Caco-2 (cell line): ENCODE measurements at regions of chr11 and their contacts with region 1.

Region 1: DNA sequence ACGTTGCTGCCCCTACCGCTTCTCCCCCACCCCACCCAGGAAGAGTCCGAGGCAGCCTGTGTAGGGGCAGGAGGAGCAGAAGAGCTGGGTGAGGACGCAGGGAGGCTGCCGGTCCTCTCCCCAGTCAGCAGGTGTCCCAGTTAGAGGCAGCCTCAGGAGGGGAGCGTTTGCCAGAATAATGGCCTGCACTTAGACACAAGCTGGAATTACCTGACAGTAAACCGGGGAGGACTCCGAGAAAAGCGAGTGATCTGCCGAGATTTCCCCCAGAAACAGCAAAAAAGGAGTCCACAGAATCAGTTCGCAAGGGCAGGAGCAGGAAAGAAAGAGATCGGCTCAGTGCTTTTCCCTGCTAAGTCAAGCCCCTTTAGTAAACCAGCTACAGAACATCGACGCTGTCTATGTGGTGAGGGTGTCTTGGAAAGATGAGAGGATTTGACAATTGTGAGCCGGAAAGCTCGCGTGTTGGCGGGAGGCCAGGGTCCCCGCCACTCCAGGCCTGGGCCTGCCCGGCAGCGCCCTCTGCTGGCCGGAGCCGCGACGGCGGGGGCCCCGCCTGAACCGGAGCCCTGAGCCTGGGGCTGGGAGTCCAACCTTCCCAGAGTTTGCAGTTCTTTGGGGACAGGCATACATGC is 17.7 kb upstream of the THRSP start:
- DNase-seq: peak; percentile 80 to 97
- H3K4me3 ChIP-seq: peak overlapping the region; percentile 28
- H3K4me3 Mint-ChIP-seq: peak overlapping the region; percentile 75
- H3K27ac Mint-ChIP-seq: peak overlapping the region; percentile 1
- H3K4me1 ChIP-seq: peaks cover 15% of the 10 kb centered on the region
- H3K4me1 Mint-ChIP-seq: peaks cover 23% of the 10 kb centered on the region
- H3K27me3 ChIP-seq: no peaks in the 10 kb centered on the region
- H3K27me3 Mint-ChIP-seq: no peaks in the 10 kb centered on the region
- CTCF ChIP-seq: peak; percentile 99

Region 2: GRCh38 chr11:77695417-77695816 is 350.6 kb before region 1 on chr11:
- CTCF ChIA-PET with region 1: no interaction called
- POLR2A ChIA-PET with region 1: no interaction called
- intact Hi-C with region 1: no loop called
- DNase-seq: no peak
- H3K4me3 ChIP-seq: no peak overlapping the region
- H3K4me3 Mint-ChIP-seq: no peak overlapping the region
- H3K27ac Mint-ChIP-seq: no peak overlapping the region
- H3K4me1 ChIP-seq: no peaks in the 10 kb centered on the region
- H3K4me1 Mint-ChIP-seq: no peaks in the 10 kb centered on the region
- H3K27me3 ChIP-seq: no peaks in the 10 kb centered on the region
- H3K27me3 Mint-ChIP-seq: no peaks in the 10 kb centered on the region
- CTCF ChIP-seq: no peak

Region 3: GRCh38 chr11:77820563-77821348 is 225.2 kb before region 1 on chr11 and contains the starts of genes AAMDC and RSF1:
- CTCF ChIA-PET with region 1: no interaction called
- POLR2A ChIA-PET with region 1: no interaction called
- intact Hi-C with region 1: loop called (anchors 5 kb)
- DNase-seq: peak; percentile 100
- H3K4me3 ChIP-seq: peak within 1 kb of the TSS; percentile 100
- H3K4me3 Mint-ChIP-seq: peak within 1 kb of the TSS; percentile 84
- H3K27ac Mint-ChIP-seq: peak within 1 kb of the TSS; percentile 77
- H3K4me1 ChIP-seq: peaks cover 36% of the 10 kb centered on the region
- H3K4me1 Mint-ChIP-seq: peaks cover 6% of the 10 kb centered on the region
- H3K27me3 ChIP-seq: no peaks in the 10 kb centered on the region
- H3K27me3 Mint-ChIP-seq: no peaks in the 10 kb centered on the region
- CTCF ChIP-seq: peak; percentile 72 to 92
- total RNA-seq, gene AAMDC: 87.7 and 89.7 TPM in 2 replicates
- total RNA-seq, gene RSF1: 108 and 121 TPM in 2 replicates

Region 4: GRCh38 chr11:78000193-78000592 is 45.8 kb before region 1 on chr11:
- CTCF ChIA-PET with region 1: interaction called, 23 read pairs
- POLR2A ChIA-PET with region 1: no interaction called
- intact Hi-C with region 1: loop called (anchors 1 kb)
- DNase-seq: peak; percentile 77 to 80
- H3K4me3 ChIP-seq: no peak overlapping the region
- H3K4me3 Mint-ChIP-seq: no peak overlapping the region
- H3K27ac Mint-ChIP-seq: no peak overlapping the region
- H3K4me1 ChIP-seq: peaks cover 10% of the 10 kb centered on the region
- H3K4me1 Mint-ChIP-seq: no peaks in the 10 kb centered on the region
- H3K27me3 ChIP-seq: no peaks in the 10 kb centered on the region
- H3K27me3 Mint-ChIP-seq: no peaks in the 10 kb centered on the region
- CTCF ChIP-seq: peak; percentile 89 to 91

Region 5: GRCh38 chr11:78061088-78061921 is 15.3 kb after region 1 on chr11:
- CTCF ChIA-PET with region 1: interaction called, 13 read pairs
- POLR2A ChIA-PET with region 1: no interaction called
- intact Hi-C with region 1: no loop called
- DNase-seq: peak; percentile 52 to 65
- H3K4me3 ChIP-seq: no peak overlapping the region
- H3K4me3 Mint-ChIP-seq: no peak overlapping the region
- H3K27ac Mint-ChIP-seq: peak overlapping the region; percentile 70
- H3K4me1 ChIP-seq: peaks cover 31% of the 10 kb centered on the region
- H3K4me1 Mint-ChIP-seq: peaks cover 15% of the 10 kb centered on the region
- H3K27me3 ChIP-seq: no peaks in the 10 kb centered on the region
- H3K27me3 Mint-ChIP-seq: no peaks in the 10 kb centered on the region
- CTCF ChIP-seq: no peak

Region 6: DNA sequence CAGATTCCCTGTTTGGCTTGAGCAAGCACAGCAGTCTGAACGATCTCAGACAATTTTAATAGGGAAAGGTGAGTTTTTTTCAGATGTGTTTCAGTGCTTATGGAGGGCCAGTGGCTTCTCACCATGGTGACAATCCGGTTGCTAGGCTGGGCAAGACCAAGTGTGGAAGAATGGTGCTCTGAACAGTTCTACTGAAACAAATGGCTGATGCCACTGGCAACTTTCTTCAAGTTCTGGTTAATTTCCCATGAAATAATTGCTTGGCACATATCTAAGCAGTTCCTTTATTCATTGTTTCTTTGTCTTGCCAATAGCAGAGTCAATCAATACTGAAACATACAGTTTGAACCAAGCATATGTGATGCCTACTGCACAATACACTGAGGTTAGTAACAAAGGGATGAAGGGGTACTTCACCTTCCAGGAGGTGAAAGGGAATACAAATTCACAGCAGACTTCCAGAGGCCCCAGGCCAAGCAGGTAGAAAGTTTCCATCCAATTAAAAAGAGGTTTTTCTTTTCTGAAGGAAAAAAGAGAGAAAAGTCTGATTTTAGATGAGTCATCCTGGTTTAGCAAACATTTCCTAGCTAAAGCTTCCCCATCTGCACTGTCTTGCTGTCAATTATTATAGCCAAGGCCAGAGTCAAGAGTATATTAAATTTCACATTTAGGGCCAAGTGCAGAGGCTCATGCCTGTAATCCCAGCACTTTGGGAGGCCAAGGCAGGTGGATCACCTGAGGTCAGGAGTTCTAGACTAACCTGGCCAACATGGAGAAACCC is 54.9 kb after region 1 on chr11:
- CTCF ChIA-PET with region 1: interaction called, 25 read pairs
- POLR2A ChIA-PET with region 1: no interaction called
- intact Hi-C with region 1: loop called (anchors 1 kb)
- DNase-seq: no peak
- H3K4me3 ChIP-seq: no peak overlapping the region
- H3K4me3 Mint-ChIP-seq: no peak overlapping the region
- H3K27ac Mint-ChIP-seq: no peak overlapping the region
- H3K4me1 ChIP-seq: peaks cover 6% of the 10 kb centered on the region; the same call in 1 of the 2 replicates
- H3K4me1 Mint-ChIP-seq: peaks cover 19% of the 10 kb centered on the region
- H3K27me3 ChIP-seq: no peaks in the 10 kb centered on the region
- H3K27me3 Mint-ChIP-seq: no peaks in the 10 kb centered on the region
- CTCF ChIP-seq: no peak